CD8-positive, alpha-beta memory T cell (primary cell): ENCODE measurements at regions of chr20 and their contacts with region 1.

Region 1: GRCh38 chr20:59159493-59160376 is 3.9 kb upstream of the ZNF831 start:
- DNase-seq: peak; percentile 74 to 93 (median 87)
- H3K4me3 ChIP-seq: peak overlapping the region; percentile 92
- H3K4me3 Mint-ChIP-seq: peak overlapping the region; percentile 88 to 95 (median 92)
- H3K27ac ChIP-seq: peak overlapping the region; percentile 98
- H3K27ac Mint-ChIP-seq: peak overlapping the region; percentile 95 to 100 (median 98)
- H3K4me1 ChIP-seq: peaks cover 80% of the 10 kb centered on the region
- H3K4me1 Mint-ChIP-seq: peaks cover 70 to 95% (median 88%) of the 10 kb centered on the region in 3 donors
- H3K27me3 ChIP-seq: no peaks in the 10 kb centered on the region
- H3K27me3 Mint-ChIP-seq: peaks cover 0 to 2% of the 10 kb centered on the region in 2 donors

Region 2: DNA sequence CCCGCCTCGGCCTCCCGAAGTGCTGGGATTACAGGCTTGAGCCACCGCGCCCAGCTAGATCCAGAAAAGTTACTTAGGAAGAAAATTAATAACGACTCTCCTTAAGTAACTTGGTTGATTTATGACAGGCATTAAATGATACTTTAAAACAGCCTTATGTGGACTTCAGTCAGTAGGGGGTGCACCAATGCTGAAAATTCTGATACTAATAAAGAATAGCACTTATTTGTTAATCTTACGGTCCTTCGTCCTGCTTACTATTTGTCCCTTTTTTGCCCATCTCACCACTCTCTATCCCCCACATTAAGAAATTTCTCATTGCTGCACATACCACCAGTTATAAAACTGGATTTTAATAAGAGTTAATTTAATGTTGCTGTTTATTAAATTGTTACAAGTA is 104.4 kb before region 1 on chr20:
- CTCF ChIA-PET with region 1: no interaction called
- POLR2A ChIA-PET with region 1: no interaction called
- DNase-seq: peak in 2 of 5 donors; percentile 13 to 14
- H3K4me3 ChIP-seq: no peak overlapping the region
- H3K4me3 Mint-ChIP-seq: no peak overlapping the region
- H3K27ac ChIP-seq: no peak overlapping the region
- H3K27ac Mint-ChIP-seq: no peak overlapping the region
- H3K4me1 ChIP-seq: no peaks in the 10 kb centered on the region
- H3K4me1 Mint-ChIP-seq: no peaks in the 10 kb centered on the region
- H3K27me3 ChIP-seq: no peaks in the 10 kb centered on the region
- H3K27me3 Mint-ChIP-seq: peaks cover 17 to 50% of the 10 kb centered on the region in 2 donors

Region 3: DNA sequence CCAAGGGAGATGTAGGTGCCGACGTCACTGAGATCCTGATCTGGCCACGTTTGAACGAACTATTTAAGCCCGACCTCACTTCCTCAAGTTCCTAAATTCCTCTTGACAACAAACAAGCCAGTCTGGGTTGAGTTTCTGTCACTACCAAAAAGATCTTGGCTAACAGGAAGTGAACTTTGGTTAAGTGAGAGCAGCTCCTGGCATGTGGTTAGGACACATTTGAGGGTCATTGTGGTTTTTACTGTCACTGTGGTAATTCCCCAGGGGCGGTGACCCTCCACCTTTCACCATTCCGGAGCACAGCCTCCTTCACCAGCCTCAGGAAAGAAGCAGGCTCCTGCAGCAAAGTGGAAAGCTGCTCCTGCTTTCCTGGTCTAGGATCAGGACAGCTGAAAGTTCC is 39.2 kb before region 1 on chr20:
- CTCF ChIA-PET with region 1: interaction called, 21 read pairs
- POLR2A ChIA-PET with region 1: interaction called, 21 read pairs
- DNase-seq: peak in 4 of 5 donors; percentile 18 to 69 (median 51)
- H3K4me3 ChIP-seq: no peak overlapping the region
- H3K4me3 Mint-ChIP-seq: peak overlapping the region; percentile 3 to 87 (median 59)
- H3K27ac ChIP-seq: peak overlapping the region; percentile 44
- H3K27ac Mint-ChIP-seq: peak overlapping the region; percentile 95 to 100 (median 99)
- H3K4me1 ChIP-seq: peaks cover 78% of the 10 kb centered on the region
- H3K4me1 Mint-ChIP-seq: peaks cover 71 to 87% (median 84%) of the 10 kb centered on the region in 3 donors
- H3K27me3 ChIP-seq: no peaks in the 10 kb centered on the region
- H3K27me3 Mint-ChIP-seq: peaks cover 0 to 2% of the 10 kb centered on the region in 2 donors

Region 4: GRCh38 chr20:59145924-59146779 is 13.6 kb before region 1 on chr20:
- CTCF ChIA-PET with region 1: interaction called, 5 read pairs
- POLR2A ChIA-PET with region 1: interaction called, 19 read pairs
- DNase-seq: peak in 3 of 5 donors; percentile 49 to 74 (median 66)
- H3K4me3 ChIP-seq: peak overlapping the region; percentile 70
- H3K4me3 Mint-ChIP-seq: peak overlapping the region; percentile 87 to 97 (median 91)
- H3K27ac ChIP-seq: peak overlapping the region; percentile 73
- H3K27ac Mint-ChIP-seq: peak overlapping the region; percentile 94 to 100 (median 98)
- H3K4me1 ChIP-seq: peaks cover 73% of the 10 kb centered on the region
- H3K4me1 Mint-ChIP-seq: peaks cover 73 to 76% (median 74%) of the 10 kb centered on the region in 3 donors
- H3K27me3 ChIP-seq: no peaks in the 10 kb centered on the region
- H3K27me3 Mint-ChIP-seq: peaks cover 0 to 1% of the 10 kb centered on the region in 2 donors

Region 5: DNA sequence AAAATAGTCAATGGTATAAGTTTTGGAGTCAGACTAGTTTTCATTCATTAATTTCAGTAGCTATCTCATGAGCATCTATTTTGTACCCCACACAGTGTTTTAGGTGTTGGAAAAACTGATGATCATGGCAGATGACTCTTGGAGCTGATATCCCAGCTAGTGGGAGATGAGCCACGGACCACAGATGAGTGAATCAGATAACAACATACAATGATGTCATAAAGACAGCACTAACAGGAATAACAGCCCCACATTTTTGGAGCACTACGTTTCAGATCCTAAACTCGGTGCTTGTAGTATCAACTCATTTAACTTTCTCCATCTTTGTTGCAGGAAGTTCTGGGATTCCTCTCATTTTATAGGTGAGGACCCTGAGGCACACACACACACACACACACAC is 72.9 kb after region 1 on chr20:
- CTCF ChIA-PET with region 1: no interaction called
- POLR2A ChIA-PET with region 1: no interaction called
- DNase-seq: no peak
- H3K4me3 ChIP-seq: no peak overlapping the region
- H3K4me3 Mint-ChIP-seq: no peak overlapping the region
- H3K27ac ChIP-seq: no peak overlapping the region
- H3K27ac Mint-ChIP-seq: peak overlapping the region in 3 of 8 donors; percentile 4 to 65 (median 63)
- H3K4me1 ChIP-seq: peaks cover 8% of the 10 kb centered on the region
- H3K4me1 Mint-ChIP-seq: peaks cover 0 to 23% (median 4%) of the 10 kb centered on the region in 3 donors
- H3K27me3 ChIP-seq: no peaks in the 10 kb centered on the region
- H3K27me3 Mint-ChIP-seq: peaks cover 0 to 2% of the 10 kb centered on the region in 2 donors